MCF 10A (cell line): ENCODE measurements at regions of chr10 and their contacts with region 1.

Region 1: DNA sequence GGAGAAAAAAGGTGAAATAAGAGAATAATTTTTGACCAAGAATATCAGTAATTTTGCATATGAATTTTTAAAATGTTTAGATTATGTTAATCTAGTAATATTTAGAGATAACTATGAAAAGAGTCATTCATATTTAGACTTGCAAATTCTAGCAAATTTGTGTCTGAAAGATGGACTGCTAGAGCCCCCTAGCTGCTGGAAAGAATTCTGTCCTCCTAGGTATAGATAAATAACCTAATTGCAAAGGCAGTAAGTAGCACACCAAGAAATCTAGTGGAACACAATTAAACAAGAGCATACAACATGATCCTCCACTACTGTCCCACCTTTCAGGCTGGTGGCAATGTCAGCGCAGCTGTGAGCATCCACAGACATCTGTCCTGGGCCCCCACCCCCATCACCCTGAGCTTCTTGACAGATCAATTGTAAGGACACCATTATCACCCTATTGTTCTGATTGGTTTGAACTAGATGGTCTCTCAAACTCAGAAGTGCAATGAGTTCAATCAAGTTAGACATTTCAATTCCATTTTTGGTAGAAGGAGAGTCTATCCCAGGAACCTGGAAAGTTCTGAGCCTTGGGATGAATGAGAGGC is 15.0 kb upstream of the GFRA1 start:
- DNase-seq: peak; percentile 56
- H3K4me3 Mint-ChIP-seq: no peak overlapping the region
- H3K27ac Mint-ChIP-seq: no peak overlapping the region
- H3K4me1 Mint-ChIP-seq: no peaks in the 10 kb centered on the region
- H3K27me3 Mint-ChIP-seq: peaks cover 34% of the 10 kb centered on the region
- CTCF ChIP-seq: peak; percentile 64

Region 2: DNA sequence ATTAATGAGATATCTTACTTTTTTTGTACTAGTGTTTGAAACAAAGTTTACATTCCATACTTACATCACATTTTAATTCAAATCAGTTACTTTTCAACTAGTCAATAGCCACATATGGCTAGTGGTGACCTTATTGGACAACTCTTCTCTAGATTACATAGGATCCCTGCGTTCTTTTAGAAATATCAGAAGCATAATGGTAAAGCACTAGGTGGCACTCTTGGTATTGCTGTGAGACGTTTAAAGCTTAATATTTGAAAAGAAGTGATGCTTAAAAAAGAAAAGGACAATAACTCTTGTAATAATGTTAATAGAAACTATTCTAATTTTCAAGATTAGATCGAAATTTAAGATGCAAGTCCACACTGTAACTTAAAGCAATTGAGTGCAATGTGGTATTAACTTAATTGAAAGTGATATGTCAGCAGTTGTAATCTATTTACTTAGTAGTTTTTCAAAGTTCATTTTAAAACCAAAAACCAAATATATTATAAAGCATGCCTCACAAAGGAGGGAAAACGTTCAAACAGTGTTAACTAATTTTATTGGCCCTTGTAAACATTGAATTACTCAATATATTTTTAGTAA is 855.7 kb before region 1 on chr10:
- CTCF ChIA-PET with region 1: interaction called, 8 read pairs
- POLR2A ChIA-PET with region 1: no interaction called
- intact Hi-C with region 1: loop called (anchors 2 kb)
- DNase-seq: peak; percentile 25
- H3K4me3 Mint-ChIP-seq: no peak overlapping the region
- H3K27ac Mint-ChIP-seq: no peak overlapping the region
- H3K4me1 Mint-ChIP-seq: no peaks in the 10 kb centered on the region
- H3K27me3 Mint-ChIP-seq: peaks cover 31% of the 10 kb centered on the region
- CTCF ChIP-seq: peak; percentile 43

Region 3: GRCh38 chr10:115790220-115790619 is 497.8 kb before region 1 on chr10:
- CTCF ChIA-PET with region 1: interaction called, 12 read pairs
- POLR2A ChIA-PET with region 1: no interaction called
- intact Hi-C with region 1: no loop called
- DNase-seq: no peak
- H3K4me3 Mint-ChIP-seq: no peak overlapping the region
- H3K27ac Mint-ChIP-seq: no peak overlapping the region
- H3K4me1 Mint-ChIP-seq: no peaks in the 10 kb centered on the region
- H3K27me3 Mint-ChIP-seq: no peaks in the 10 kb centered on the region
- CTCF ChIP-seq: no peak

Region 4: GRCh38 chr10:115948465-115948864 is 339.5 kb before region 1 on chr10:
- CTCF ChIA-PET with region 1: interaction called, 12 read pairs
- POLR2A ChIA-PET with region 1: no interaction called
- intact Hi-C with region 1: loop called (anchors 5 kb)
- DNase-seq: peak; percentile 37
- H3K4me3 Mint-ChIP-seq: no peak overlapping the region
- H3K27ac Mint-ChIP-seq: no peak overlapping the region
- H3K4me1 Mint-ChIP-seq: peaks cover 14% of the 10 kb centered on the region
- H3K27me3 Mint-ChIP-seq: no peaks in the 10 kb centered on the region
- CTCF ChIP-seq: peak; percentile 26

Region 5: GRCh38 chr10:116385994-116386809 is 98.2 kb after region 1 on chr10:
- CTCF ChIA-PET with region 1: interaction called, 32 read pairs
- POLR2A ChIA-PET with region 1: no interaction called
- intact Hi-C with region 1: loop called (anchors 2 kb)
- DNase-seq: peak; percentile 45
- H3K4me3 Mint-ChIP-seq: no peak overlapping the region
- H3K27ac Mint-ChIP-seq: no peak overlapping the region
- H3K4me1 Mint-ChIP-seq: no peaks in the 10 kb centered on the region
- H3K27me3 Mint-ChIP-seq: no peaks in the 10 kb centered on the region
- CTCF ChIP-seq: peak; percentile 59